Calu3 (cell line): ENCODE measurements at regions of chr16 and their contacts with region 1.

Region 1: GRCh38 chr16:85027349-85027957 is at the start of gene KIAA0513:
- DNase-seq: peak; percentile 98
- H3K4me3 Mint-ChIP-seq: peak within 1 kb of the TSS; percentile 85
- H3K27ac Mint-ChIP-seq: peak within 1 kb of the TSS; percentile 77
- H3K4me1 Mint-ChIP-seq: peaks cover 33% of the 10 kb centered on the region
- H3K27me3 Mint-ChIP-seq: no peaks in the 10 kb centered on the region
- CTCF ChIP-seq: no peak
- total RNA-seq, gene KIAA0513: 12.4 and 15.1 TPM in 2 replicates

Region 2: DNA sequence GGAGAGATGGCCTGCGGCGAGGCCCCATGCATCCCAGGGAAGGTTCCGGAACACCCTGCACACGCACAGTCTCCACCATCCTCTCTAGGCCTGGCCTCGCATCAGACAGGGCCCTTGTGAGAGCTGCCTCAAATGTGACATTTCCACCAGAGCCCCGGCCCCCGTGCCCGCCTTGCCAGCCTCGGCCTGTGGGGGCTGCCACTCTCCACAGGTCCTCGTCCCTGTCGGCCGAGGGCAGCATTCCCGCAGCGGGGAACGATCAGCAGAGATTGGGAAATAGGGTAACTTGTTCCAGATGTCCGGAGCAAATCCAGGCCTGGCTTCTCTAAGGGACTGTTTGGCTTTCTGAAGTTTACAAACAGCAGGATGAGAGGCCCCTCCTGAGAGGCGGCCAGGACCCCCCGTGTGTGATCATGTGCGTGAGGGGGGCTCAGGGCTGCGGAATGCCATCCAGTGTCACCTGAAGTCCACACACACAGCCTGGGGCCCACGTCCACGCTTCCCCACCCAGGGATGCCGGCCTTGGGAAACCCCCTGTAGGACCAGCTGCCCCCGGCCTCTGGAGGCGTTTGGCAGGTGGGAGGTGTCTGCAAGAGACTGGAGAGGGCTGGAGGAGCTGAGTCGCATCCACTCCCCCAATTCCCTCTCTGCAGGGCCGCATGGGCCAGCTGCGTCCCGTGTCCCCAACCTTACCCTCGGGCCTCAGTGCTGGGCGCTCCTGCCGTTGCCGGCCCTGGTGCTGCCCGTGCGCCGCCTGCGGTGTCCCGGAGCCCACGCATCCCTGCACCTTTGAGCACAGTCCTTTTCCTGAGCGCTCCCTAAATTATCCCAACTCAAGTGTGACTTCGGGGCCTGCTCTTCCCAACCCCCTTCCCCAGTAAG is 86.5 kb before region 1 on chr16:
- CTCF ChIA-PET with region 1: no interaction called
- intact Hi-C with region 1: no loop called
- DNase-seq: no peak
- H3K4me3 Mint-ChIP-seq: no peak overlapping the region
- H3K27ac Mint-ChIP-seq: no peak overlapping the region
- H3K4me1 Mint-ChIP-seq: no peaks in the 10 kb centered on the region
- H3K27me3 Mint-ChIP-seq: peaks cover 60% of the 10 kb centered on the region
- CTCF ChIP-seq: no peak

Region 3: GRCh38 chr16:84992717-84993075 is 34.8 kb before region 1 on chr16:
- CTCF ChIA-PET with region 1: interaction called, 13 read pairs
- intact Hi-C with region 1: loop called (anchors 5 kb)
- DNase-seq: no peak
- H3K4me3 Mint-ChIP-seq: peak overlapping the region; percentile 37
- H3K27ac Mint-ChIP-seq: peak overlapping the region; percentile 95
- H3K4me1 Mint-ChIP-seq: peaks cover 54% of the 10 kb centered on the region
- H3K27me3 Mint-ChIP-seq: no peaks in the 10 kb centered on the region
- CTCF ChIP-seq: no peak

Region 4: DNA sequence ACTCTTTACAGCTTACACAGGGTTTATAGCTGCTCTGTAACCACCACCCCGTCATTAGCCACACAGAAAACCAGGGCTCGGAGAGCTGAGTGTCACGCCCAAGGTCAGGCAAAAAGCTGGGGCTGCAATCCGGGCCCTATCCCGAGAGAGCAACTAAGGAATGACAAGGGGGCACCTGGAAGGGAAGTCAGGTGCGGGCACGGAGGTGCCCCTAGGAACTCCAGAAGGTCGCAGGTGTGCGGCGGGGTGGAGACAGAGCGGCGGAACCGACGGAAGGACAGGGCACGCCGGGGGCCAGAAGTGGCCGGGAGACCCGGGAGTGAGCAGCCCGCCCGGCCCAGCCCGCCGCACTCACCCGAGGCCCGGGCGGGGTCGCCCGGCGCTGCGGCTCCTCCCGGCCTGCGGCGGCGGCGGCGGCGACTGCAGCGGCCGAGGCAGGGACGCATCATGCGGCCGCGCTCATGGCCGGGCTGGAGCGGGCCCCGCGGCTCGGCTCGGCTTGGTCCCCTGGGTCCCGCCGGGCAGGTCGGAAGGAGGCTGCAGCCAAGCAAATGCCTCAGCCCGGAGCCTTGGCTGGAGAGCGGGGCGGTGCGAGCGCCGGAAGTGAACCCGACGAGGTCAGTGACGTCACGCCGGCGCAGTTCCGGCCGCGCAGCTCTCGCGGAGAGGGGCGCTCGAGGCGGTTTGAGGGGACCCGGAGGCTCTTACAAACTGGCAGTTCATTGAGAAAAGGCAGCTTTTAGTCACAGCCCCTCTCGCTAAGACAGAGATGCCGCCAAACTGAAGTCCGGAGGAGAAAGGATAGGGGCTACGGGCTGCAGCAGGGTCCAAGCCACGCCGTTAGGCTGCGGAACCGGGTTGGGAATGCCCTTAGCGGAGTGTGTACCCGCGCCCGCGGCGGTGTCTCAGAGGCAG is 16.3 kb before region 1 on chr16 and contains the start of gene ZDHHC7:
- CTCF ChIA-PET with region 1: interaction called, 7 read pairs
- intact Hi-C with region 1: loop called (anchors 2 kb)
- DNase-seq: peak; percentile 92
- H3K4me3 Mint-ChIP-seq: peak within 1 kb of the TSS; percentile 89
- H3K27ac Mint-ChIP-seq: peak within 1 kb of the TSS; percentile 89
- H3K4me1 Mint-ChIP-seq: peaks cover 36% of the 10 kb centered on the region
- H3K27me3 Mint-ChIP-seq: no peaks in the 10 kb centered on the region
- CTCF ChIP-seq: no peak
- total RNA-seq, gene ZDHHC7: 100 and 109 TPM in 2 replicates

Region 5: DNA sequence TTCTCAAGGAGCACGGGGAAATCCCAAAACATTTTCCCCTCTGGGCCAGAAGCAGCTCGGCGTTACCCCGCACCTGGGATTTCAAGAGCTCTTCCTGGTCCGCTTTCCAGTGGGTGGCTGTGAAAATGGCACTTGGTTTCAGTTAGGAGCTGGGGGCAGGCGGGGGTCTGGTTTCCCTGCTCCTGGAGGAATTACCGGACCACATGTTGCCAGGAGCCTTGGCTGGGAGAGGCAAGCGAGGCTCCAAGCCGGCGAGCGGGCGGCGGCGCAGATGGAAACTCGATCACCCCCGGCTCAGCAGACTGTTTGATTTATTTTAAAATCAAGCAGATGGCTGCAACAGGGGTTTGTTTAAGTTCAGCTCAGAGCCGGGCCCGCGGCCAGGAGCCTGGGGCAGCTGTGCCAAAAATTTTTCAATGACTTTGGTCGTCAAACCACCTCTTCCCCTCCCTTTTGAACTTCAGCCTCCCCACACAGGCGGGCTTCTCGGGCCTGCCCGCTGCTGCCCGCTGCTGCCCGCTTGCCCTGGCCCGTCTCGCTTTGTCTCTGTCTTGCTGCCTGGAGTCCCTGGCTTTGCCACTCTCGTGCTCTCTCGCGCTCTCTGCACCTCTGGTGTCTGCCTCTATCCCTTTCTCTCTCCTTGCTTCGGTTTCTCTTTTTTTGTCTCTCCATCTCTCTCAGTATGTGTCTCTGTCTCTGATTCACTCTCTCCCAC is 192.8 kb after region 1 on chr16:
- CTCF ChIA-PET with region 1: no interaction called
- intact Hi-C with region 1: no loop called
- DNase-seq: peak; percentile 28
- H3K4me3 Mint-ChIP-seq: peak overlapping the region; percentile 33
- H3K27ac Mint-ChIP-seq: no peak overlapping the region
- H3K4me1 Mint-ChIP-seq: peaks cover 9% of the 10 kb centered on the region
- H3K27me3 Mint-ChIP-seq: peaks cover 95% of the 10 kb centered on the region
- CTCF ChIP-seq: no peak